ENCODE measurements at regions of chr17 and their contacts with region 1.

Region 1: DNA sequence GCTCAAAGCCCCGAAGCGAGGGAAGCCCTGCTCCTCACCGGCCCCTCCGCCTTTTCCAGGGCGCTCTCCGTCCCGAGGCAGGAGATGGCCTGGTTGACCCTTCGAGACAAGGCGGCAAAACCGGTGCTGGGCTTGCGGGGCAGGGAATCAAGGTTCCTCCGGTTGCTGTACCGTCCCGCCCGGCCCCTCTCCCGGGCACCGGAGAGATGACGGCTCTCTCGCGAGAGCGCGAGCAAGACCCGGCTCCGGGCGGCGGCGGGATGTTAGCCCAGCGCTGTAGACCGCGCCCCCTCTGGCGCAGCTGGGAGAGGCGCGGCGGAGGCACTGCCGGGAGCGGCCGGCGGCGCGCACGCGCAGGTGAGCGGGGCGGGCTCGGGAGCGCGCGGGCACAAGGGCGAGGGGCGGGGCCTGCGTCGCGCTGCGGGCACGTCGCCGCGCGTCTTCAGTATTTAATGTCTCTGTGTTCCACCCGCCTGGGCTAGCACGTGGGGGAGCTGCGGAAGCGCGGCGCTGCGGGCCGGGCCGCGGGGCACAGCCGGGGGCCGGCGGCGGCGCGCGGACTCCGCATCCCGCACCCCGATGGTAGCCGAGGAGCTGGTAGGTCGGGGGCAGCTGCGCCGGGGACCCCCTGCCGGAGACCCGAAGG is at the start of gene AKAP1:
- DNase-seq: peak; percentile 94
- ATAC-seq: peak; percentile 89
- H3K4me3 Mint-ChIP-seq: peak within 1 kb of the TSS; percentile 90
- H3K27ac Mint-ChIP-seq: peak within 1 kb of the TSS; percentile 91
- H3K4me1 Mint-ChIP-seq: peaks cover 25% of the 10 kb centered on the region
- H3K27me3 Mint-ChIP-seq: no peaks in the 10 kb centered on the region
- CTCF ChIP-seq: no peak
- total RNA-seq, gene AKAP1: 22.5 and 26.2 TPM in 2 replicates

Region 2: GRCh38 chr17:56913864-56914640 is 170.9 kb before region 1 on chr17 and contains the start of gene TRIM25:
- CTCF ChIA-PET with region 1: no interaction called
- POLR2A ChIA-PET with region 1: interaction called, 4 read pairs
- intact Hi-C with region 1: loop called (anchors 5 kb)
- DNase-seq: peak; percentile 71
- ATAC-seq: peak; percentile 87
- H3K4me3 Mint-ChIP-seq: peak within 1 kb of the TSS; percentile 94
- H3K27ac Mint-ChIP-seq: peak within 1 kb of the TSS; percentile 90
- H3K4me1 Mint-ChIP-seq: peaks cover 54% of the 10 kb centered on the region
- H3K27me3 Mint-ChIP-seq: no peaks in the 10 kb centered on the region
- CTCF ChIP-seq: no peak
- total RNA-seq, gene TRIM25: 63.5 and 71.4 TPM in 2 replicates

Region 3: DNA sequence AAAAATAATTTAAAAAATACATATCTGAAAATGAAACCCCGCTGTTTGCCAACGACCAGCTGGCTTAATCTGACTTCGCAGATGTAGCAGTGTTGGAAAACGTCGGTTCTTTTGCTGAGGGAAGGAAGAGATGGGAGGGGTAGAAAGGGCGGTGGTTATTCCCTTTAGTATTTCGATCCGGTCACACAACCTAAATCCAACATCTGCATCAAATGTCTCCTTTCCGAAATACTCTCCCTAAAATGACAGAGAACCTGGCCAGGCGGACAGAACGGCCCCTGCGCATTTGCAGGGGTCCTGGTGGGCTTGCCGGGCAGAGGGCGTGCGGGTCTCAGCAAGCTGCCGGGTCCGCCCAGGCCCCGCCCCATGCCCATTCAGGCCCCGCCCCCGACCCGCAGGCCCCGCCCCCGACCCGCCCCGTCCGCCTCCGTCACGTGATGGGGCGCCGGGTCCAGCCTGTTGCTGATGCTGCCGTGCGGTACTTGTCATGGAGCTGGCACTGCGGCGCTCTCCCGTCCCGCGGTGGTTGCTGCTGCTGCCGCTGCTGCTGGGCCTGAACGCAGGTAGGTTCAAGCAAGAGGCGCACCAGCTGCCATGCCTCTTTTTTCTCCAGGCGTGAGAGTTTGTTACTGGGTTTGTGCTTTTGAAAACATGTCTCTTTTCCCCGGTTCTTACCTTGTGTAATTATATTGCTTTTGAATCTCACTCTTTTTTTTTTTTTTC is 107.1 kb before region 1 on chr17 and contains the start of gene SCPEP1:
- CTCF ChIA-PET with region 1: no interaction called
- POLR2A ChIA-PET with region 1: interaction called, 13 read pairs
- intact Hi-C with region 1: loop called (anchors 1 kb)
- DNase-seq: peak; percentile 67
- ATAC-seq: peak; percentile 97
- H3K4me3 Mint-ChIP-seq: peak within 1 kb of the TSS; percentile 91
- H3K27ac Mint-ChIP-seq: peak within 1 kb of the TSS; percentile 89
- H3K4me1 Mint-ChIP-seq: peaks cover 26% of the 10 kb centered on the region
- H3K27me3 Mint-ChIP-seq: no peaks in the 10 kb centered on the region
- CTCF ChIP-seq: no peak
- total RNA-seq, gene SCPEP1: 32.0 and 35.2 TPM in 2 replicates

Region 4: GRCh38 chr17:57009737-57010445 is 75.0 kb before region 1 on chr17:
- CTCF ChIA-PET with region 1: no interaction called
- POLR2A ChIA-PET with region 1: no interaction called
- intact Hi-C with region 1: loop called (anchors 2 kb)
- DNase-seq: no peak
- ATAC-seq: peak; percentile 85
- H3K4me3 Mint-ChIP-seq: peak overlapping the region; percentile 38
- H3K27ac Mint-ChIP-seq: peak overlapping the region; percentile 1
- H3K4me1 Mint-ChIP-seq: peaks cover 35% of the 10 kb centered on the region
- H3K27me3 Mint-ChIP-seq: no peaks in the 10 kb centered on the region
- CTCF ChIP-seq: no peak

Region 5: DNA sequence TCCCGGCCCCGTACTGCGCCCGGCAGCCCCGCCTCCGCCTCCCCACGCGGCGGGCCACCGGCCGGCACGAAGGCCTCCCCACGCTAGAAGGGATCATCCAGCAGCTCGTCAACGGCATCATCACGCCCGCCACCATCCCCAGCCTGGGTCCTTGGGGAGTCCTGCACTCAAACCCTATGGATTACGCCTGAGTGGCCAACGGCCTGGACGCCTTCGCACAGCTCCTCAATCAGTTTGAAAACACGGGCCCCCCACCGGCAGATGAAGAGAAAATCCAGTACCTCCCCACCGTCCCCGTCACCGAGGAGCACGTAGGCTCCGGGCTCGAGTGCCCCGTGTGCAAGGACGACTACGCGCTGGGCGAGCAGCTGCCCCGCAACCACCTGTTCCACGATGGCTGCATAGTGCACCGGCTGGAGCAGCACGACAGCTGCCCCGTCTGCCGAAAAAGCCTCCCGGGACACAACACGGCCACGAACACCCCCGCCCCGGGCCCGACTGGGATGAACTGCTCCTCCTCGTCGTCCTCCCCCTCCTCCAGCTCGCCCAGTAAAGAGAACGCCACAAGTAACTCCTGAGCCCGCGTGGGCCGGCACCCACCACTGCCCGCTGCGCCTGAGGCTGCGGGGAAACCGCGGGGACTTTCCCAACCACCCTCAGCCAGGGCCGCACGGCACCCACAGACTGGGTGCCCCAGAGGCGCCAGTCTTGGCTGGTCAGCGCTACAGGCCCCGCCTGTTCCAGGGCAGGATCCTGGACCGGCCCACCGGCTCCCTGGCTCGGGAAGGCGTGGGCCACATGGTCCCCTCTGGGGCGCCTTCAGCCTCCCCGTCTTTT is 38.8 kb before region 1 on chr17:
- CTCF ChIA-PET with region 1: no interaction called
- POLR2A ChIA-PET with region 1: interaction called, 12 read pairs
- intact Hi-C with region 1: no loop called
- DNase-seq: peak; percentile 36
- ATAC-seq: peak; percentile 60
- H3K4me3 Mint-ChIP-seq: peak overlapping the region; percentile 81
- H3K27ac Mint-ChIP-seq: no peak overlapping the region
- H3K4me1 Mint-ChIP-seq: peaks cover 23% of the 10 kb centered on the region
- H3K27me3 Mint-ChIP-seq: peaks cover 34% of the 10 kb centered on the region
- CTCF ChIP-seq: no peak

Region 6: GRCh38 chr17:57849874-57850754 is 765.2 kb after region 1 on chr17 and contains the start of gene MRPS23:
- CTCF ChIA-PET with region 1: no interaction called
- POLR2A ChIA-PET with region 1: interaction called, 7 read pairs
- intact Hi-C with region 1: loop called (anchors 1 kb)
- DNase-seq: peak; percentile 87
- ATAC-seq: peak; percentile 95
- H3K4me3 Mint-ChIP-seq: peak within 1 kb of the TSS; percentile 93
- H3K27ac Mint-ChIP-seq: peak within 1 kb of the TSS; percentile 96
- H3K4me1 Mint-ChIP-seq: peaks cover 38% of the 10 kb centered on the region
- H3K27me3 Mint-ChIP-seq: no peaks in the 10 kb centered on the region
- CTCF ChIP-seq: no peak
- total RNA-seq, gene MRPS23: 37.9 and 47.4 TPM in 2 replicates

Region 7: DNA sequence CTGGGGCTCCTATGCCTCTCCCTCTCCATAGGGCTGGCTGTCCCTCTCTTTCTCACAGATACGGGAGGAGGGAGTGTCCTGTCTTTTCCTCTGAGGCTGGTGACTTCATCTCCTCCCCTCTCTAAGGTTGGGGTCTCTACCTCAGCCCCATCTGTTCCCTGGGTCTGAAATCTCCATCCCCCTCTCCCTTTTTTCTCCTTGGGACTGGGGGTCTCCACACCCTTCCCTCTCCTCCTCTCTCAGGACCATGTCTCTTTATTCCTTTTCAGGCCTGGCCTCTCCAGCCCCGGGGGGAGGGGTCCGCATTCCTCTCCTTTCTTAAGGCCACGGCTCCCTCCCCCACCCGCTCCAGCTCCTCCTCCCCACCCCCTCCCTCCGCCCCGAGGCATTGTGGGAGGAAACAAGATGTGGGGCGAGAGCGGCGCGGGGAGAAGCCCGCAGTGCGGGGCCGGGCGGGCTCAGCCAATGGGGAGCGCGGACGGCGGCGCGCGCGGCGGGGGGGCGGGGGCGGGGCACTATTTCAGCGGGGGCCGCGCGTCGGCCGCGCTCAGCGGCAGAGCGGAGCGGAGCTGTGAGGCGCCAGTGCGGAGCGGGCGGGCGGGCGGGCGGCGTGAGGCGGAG is 998.1 kb after region 1 on chr17 and contains the start of gene DYNLL2:
- CTCF ChIA-PET with region 1: no interaction called
- POLR2A ChIA-PET with region 1: interaction called, 3 read pairs
- intact Hi-C with region 1: loop called (anchors 10 kb)
- DNase-seq: peak; percentile 73
- ATAC-seq: peak; percentile 85
- H3K4me3 Mint-ChIP-seq: peak within 1 kb of the TSS; percentile 86
- H3K27ac Mint-ChIP-seq: peak within 1 kb of the TSS; percentile 80
- H3K4me1 Mint-ChIP-seq: peaks cover 35% of the 10 kb centered on the region
- H3K27me3 Mint-ChIP-seq: no peaks in the 10 kb centered on the region
- CTCF ChIP-seq: no peak
- total RNA-seq, gene DYNLL2: 19.5 and 19.6 TPM in 2 replicates

Measured in activated B cell treated with CpG ODN at 0.5 μM for 24 hours (primary cell).